Endothelial cell of umbilical vein (primary cell): ENCODE measurements at regions of chr16 and their contacts with region 1.

Region 1: DNA sequence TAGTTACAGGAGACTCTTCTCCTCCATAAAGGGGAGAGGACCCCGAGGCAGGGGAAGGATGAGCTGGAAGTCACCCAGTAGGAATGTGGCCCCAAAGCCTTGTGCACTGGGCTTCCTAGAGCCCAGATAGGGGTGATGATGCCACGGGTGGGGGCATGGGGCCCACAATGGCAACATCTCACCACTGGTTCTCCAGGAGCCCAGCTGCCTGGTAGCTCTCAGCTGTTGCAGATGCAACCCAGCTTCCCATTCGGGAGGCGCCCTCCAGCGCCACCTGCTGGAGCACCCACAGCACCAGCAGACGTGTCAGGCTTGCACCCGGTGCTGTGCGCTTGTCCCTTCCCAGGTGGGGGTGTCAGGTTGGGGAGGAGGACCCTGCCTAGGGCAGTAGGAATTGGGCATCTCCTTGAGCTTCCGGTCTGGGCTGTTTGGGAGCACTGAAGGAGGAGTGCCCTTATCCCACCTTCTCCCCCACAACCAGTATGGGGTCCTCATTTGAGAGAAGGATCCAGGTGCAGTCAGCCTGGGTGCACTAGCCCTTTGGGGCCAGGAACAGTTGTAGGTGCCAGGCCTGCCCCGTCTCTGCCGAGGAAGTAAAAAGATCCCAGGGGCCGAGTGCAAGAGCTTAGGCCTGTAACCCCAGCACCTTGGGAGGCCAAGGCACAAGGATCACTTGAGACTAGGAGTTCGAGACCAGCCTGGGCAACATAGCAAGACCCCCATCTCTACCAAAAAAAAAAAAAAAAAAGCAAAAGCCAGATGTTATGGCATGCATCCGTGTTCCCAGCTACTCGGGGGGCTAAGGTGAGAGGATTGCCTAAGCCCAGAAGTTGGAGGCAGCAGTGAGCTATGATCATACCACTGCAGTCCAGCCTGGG is 14.4 kb downstream of the CDIPT start:
- DNase-seq: peak; percentile 63
- H3K4me3 ChIP-seq: no peak overlapping the region
- H3K27ac ChIP-seq: no peak overlapping the region
- H3K4me1 ChIP-seq: peaks cover 5% of the 10 kb centered on the region
- H3K27me3 ChIP-seq: no peaks in the 10 kb centered on the region
- CTCF ChIP-seq: peak; percentile 83 to 97
- POLR2A ChIP-seq: no peak

Region 2: GRCh38 chr16:29694384-29695195 is 154.1 kb before region 1 on chr16:
- CTCF ChIA-PET with region 1: interaction called, 92 read pairs
- POLR2A ChIA-PET with region 1: interaction called, 6 read pairs
- dilution Hi-C with region 1: no loop called
- intact Hi-C with region 1: no loop called
- DNase-seq: no peak
- H3K4me3 ChIP-seq: no peak overlapping the region
- H3K27ac ChIP-seq: no peak overlapping the region
- H3K4me1 ChIP-seq: no peaks in the 10 kb centered on the region
- H3K27me3 ChIP-seq: peaks cover 0 to 1% of the 10 kb centered on the region in 2 experiments
- CTCF ChIP-seq: no peak
- POLR2A ChIP-seq: no peak

Region 3: GRCh38 chr16:29805378-29806098 is 43.1 kb before region 1 on chr16:
- CTCF ChIA-PET with region 1: interaction called, 163 read pairs
- POLR2A ChIA-PET with region 1: interaction called, 4 read pairs
- dilution Hi-C with region 1: no loop called
- intact Hi-C with region 1: loop called (anchors 1 kb)
- DNase-seq: peak; percentile 97
- H3K4me3 ChIP-seq: peak overlapping the region; percentile 52 to 61 (median 58)
- H3K27ac ChIP-seq: peak overlapping the region; percentile 68
- H3K4me1 ChIP-seq: peaks cover 30% of the 10 kb centered on the region
- H3K27me3 ChIP-seq: no peaks in the 10 kb centered on the region
- CTCF ChIP-seq: no peak
- POLR2A ChIP-seq: peak; percentile 72

Region 4: DNA sequence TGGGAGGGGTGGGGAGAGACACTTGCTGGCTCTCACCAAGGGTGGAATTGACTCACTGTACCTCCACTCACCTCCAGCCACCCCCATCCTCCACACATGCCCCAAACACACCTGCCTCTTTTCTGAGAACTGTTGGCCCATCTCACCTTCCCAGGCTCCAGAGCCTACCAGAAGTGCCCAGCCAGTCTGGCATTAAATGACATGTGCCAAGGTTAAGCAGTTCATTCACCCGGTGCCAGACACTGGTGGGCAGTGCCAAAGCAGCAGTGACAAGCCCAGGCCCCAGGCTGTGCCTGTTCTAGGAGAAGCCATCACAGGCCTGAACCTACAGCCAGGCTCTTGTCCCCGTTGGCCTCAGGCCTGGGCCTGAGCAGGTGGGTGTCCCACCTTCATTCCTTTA is 17.2 kb before region 1 on chr16:
- CTCF ChIA-PET with region 1: interaction called, 66 read pairs
- POLR2A ChIA-PET with region 1: no interaction called
- dilution Hi-C with region 1: no loop called
- intact Hi-C with region 1: no loop called
- DNase-seq: no peak
- H3K4me3 ChIP-seq: no peak overlapping the region
- H3K27ac ChIP-seq: no peak overlapping the region
- H3K4me1 ChIP-seq: no peaks in the 10 kb centered on the region
- H3K27me3 ChIP-seq: no peaks in the 10 kb centered on the region
- CTCF ChIP-seq: no peak
- POLR2A ChIP-seq: no peak

Region 5: GRCh38 chr16:29906520-29907244 is 58.0 kb after region 1 on chr16:
- CTCF ChIA-PET with region 1: no interaction called
- POLR2A ChIA-PET with region 1: no interaction called
- dilution Hi-C with region 1: no loop called
- intact Hi-C with region 1: no loop called
- DNase-seq: no peak
- H3K4me3 ChIP-seq: no peak overlapping the region
- H3K27ac ChIP-seq: no peak overlapping the region
- H3K4me1 ChIP-seq: no peaks in the 10 kb centered on the region
- H3K27me3 ChIP-seq: no peaks in the 10 kb centered on the region
- CTCF ChIP-seq: no peak
- POLR2A ChIP-seq: no peak

Region 6: DNA sequence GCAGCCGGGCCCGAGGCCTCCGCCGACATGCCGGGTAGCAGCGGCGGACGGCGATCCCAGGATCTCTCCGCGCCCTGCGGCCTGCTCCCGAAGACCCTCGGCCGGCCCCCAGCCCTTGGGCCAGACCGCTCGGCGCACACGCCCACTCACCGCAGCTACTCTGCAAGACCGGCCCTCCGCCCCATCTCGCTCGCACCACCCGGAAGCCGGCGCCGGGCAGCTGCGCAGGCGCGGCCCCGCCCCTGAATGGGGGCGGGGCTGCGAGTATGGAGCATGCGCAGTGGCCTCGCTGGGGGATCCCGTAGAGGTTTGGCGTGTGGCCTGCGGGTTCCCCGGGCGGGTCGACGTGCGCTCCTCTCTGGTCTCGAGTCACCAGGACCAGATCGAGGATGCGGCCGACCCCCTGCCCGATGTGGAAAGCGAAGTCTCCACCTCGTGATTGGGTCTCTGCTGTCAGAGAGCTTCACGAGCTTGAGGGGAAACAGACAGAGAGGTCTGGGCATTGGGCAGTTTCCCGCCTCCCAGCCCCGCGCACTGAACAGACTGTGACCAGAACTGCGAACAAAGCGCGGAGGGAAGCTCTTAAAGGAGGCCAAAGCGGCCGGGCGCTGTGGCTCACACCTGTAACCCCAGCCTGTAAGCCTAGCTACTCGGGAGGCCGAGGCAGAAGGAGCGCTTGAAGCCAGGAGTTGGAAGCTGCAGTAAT is 77.5 kb after region 1 on chr16 and contains the start of gene KCTD13:
- CTCF ChIA-PET with region 1: interaction called, 11 read pairs
- POLR2A ChIA-PET with region 1: interaction called, 3 read pairs
- dilution Hi-C with region 1: no loop called
- intact Hi-C with region 1: no loop called
- DNase-seq: peak; percentile 91
- H3K4me3 ChIP-seq: peak within 1 kb of the TSS; percentile 61 to 78 (median 73)
- H3K27ac ChIP-seq: peak within 1 kb of the TSS; percentile 19
- H3K4me1 ChIP-seq: peaks cover 15% of the 10 kb centered on the region
- H3K27me3 ChIP-seq: no peaks in the 10 kb centered on the region
- CTCF ChIP-seq: no peak
- POLR2A ChIP-seq: peak; percentile 93
- total RNA-seq, gene KCTD13: 21.0 and 24.2 TPM in 2 replicates

Region 7: DNA sequence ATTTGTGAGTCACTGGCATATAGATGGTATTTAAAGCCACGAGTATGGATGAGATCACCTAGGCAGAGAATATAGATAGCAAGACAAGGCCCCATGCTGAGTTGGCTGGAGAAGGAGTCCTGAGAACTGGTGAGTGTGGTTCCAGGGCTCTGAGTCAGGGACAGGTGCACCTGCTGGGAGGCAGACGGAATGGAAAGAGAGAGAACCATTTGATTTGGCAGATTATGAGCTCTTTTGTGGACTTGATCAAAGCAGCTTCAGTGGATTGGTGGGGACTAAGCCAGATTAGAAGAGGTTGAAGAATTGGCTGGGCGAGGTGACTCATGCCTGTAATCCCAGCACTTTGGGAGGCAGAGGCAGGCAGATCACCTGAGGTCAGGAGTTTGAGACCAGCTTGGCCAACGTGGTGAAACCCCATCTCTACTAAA is 170.1 kb after region 1 on chr16:
- CTCF ChIA-PET with region 1: interaction called, 8 read pairs
- POLR2A ChIA-PET with region 1: no interaction called
- dilution Hi-C with region 1: no loop called
- intact Hi-C with region 1: loop called (anchors 1 kb)
- DNase-seq: no peak
- H3K4me3 ChIP-seq: no peak overlapping the region
- H3K27ac ChIP-seq: no peak overlapping the region
- H3K4me1 ChIP-seq: no peaks in the 10 kb centered on the region
- H3K27me3 ChIP-seq: no peaks in the 10 kb centered on the region
- CTCF ChIP-seq: no peak
- POLR2A ChIP-seq: no peak

Region 8: DNA sequence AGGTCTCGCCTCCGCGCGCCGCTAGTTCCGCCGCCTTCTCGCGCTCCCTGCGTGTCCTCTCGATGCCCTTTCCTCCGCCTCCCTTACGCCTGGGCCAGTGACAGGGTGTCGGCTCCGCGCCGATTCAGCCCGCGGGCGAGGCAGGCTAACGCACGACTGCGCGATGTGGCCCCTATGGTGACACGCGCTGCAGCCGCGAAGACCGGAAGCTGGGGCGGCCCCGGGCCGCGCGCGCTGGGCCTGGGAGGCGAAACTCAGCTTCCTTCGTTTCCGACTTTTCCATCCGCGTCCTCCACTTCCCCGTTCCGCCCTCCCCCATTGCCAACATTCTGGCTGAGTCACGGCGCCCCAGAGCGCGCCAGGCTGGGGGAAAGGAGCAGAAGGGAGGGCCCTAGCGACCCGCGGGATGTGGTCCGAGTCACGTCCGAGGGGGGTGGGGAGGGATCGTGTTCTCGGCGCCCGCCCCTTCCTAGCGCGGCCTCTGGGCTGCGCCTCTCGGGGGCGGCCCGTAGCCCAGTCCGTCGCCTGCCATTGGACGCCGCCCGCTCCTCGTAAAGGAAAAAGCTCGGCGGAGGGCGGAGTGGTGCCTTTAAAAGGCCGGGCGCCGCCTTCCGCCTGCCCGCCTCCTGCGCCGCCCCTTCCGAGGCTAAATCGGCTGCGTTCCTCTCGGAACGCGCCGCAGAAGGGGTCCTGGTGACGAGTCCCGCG is 216.6 kb after region 1 on chr16 and contains the start of gene ALDOA:
- CTCF ChIA-PET with region 1: no interaction called
- POLR2A ChIA-PET with region 1: no interaction called
- dilution Hi-C with region 1: no loop called
- intact Hi-C with region 1: no loop called
- DNase-seq: peak; percentile 99
- H3K4me3 ChIP-seq: peak within 1 kb of the TSS; percentile 71 to 95 (median 91)
- H3K27ac ChIP-seq: peak within 1 kb of the TSS; percentile 78
- H3K4me1 ChIP-seq: peaks cover 29% of the 10 kb centered on the region
- H3K27me3 ChIP-seq: no peaks in the 10 kb centered on the region
- CTCF ChIP-seq: no peak
- POLR2A ChIP-seq: peak; percentile 98
- total RNA-seq, gene ALDOA: 1,029 and 1,114 TPM in 2 replicates